Endothelial cell of umbilical vein (primary cell): ENCODE measurements at regions of chr18 and their contacts with region 1.

Region 1: DNA sequence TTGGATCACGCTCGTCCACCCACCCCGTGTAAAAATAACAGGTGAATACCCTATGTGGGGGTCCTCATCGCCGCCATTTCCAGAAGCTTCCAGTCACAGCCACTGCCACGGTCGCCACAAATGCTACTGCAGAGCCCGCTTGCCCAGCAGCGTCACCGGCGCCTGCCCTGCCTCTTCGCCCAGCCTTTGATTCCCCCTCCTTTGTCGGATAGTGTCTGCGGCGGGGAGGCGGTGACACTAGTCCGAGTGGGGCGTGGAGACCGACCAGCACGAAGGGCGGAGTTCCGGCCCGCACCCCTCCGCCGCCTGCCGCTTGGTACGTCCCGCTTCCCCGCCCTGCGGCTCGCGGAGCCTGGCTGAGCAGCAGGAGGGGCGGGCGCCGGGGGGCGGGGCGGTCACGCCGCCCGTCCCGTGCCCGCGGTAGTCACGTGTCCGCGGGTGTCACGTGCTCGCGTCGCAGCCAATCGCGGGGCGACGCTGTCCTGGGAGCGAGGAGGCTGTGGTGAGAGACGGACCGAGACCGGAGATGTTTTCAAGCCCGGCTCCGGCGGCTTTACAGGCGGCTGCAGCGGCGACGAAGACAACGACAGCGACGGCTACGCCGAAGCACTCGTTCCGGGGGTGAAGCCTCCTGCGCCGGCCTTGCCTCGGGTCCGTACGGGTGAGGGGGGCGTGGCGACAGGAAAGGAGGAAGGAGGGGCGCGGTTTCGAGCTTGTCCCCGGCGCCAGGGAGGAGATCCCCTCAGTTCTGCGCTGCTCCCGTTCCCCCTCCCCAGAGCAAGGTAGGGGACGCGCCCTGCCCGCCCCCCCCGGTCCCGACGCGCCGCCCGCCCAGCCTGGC is at the start of gene ANKRD12:
- DNase-seq: peak; percentile 99
- H3K4me3 ChIP-seq: peak within 1 kb of the TSS; percentile 50 to 86 (median 70)
- H3K27ac ChIP-seq: peak within 1 kb of the TSS; percentile 95
- H3K4me1 ChIP-seq: peaks cover 31% of the 10 kb centered on the region
- H3K27me3 ChIP-seq: no peaks in the 10 kb centered on the region
- CTCF ChIP-seq: no peak
- POLR2A ChIP-seq: peak; percentile 82
- total RNA-seq, gene ANKRD12: 25.1 and 25.4 TPM in 2 replicates

Region 2: GRCh38 chr18:9066817-9067306 is 69.7 kb before region 1 on chr18:
- CTCF ChIA-PET with region 1: interaction called, 60 read pairs
- POLR2A ChIA-PET with region 1: no interaction called
- dilution Hi-C with region 1: no loop called
- intact Hi-C with region 1: loop called (anchors 2 kb)
- DNase-seq: no peak
- H3K4me3 ChIP-seq: no peak overlapping the region
- H3K27ac ChIP-seq: no peak overlapping the region
- H3K4me1 ChIP-seq: no peaks in the 10 kb centered on the region
- H3K27me3 ChIP-seq: no peaks in the 10 kb centered on the region
- CTCF ChIP-seq: no peak
- POLR2A ChIP-seq: no peak

Region 3: GRCh38 chr18:9102508-9103375 is 33.8 kb before region 1 on chr18 and contains the start of gene NDUFV2:
- CTCF ChIA-PET with region 1: interaction called, 23 read pairs
- POLR2A ChIA-PET with region 1: interaction called, 5 read pairs
- dilution Hi-C with region 1: no loop called
- intact Hi-C with region 1: loop called (anchors 1 kb)
- DNase-seq: peak; percentile 95
- H3K4me3 ChIP-seq: peak within 1 kb of the TSS; percentile 69 to 98 (median 92)
- H3K27ac ChIP-seq: peak within 1 kb of the TSS; percentile 95
- H3K4me1 ChIP-seq: peaks cover 46% of the 10 kb centered on the region
- H3K27me3 ChIP-seq: no peaks in the 10 kb centered on the region
- CTCF ChIP-seq: no peak
- POLR2A ChIP-seq: no peak
- total RNA-seq, gene NDUFV2: 147 and 152 TPM in 2 replicates

Region 4: GRCh38 chr18:9117980-9118841 is 18.3 kb before region 1 on chr18:
- CTCF ChIA-PET with region 1: interaction called, 12 read pairs
- POLR2A ChIA-PET with region 1: interaction called, 6 read pairs
- dilution Hi-C with region 1: no loop called
- intact Hi-C with region 1: loop called (anchors 1 kb)
- DNase-seq: peak; percentile 86
- H3K4me3 ChIP-seq: peak overlapping the region in 1 of 3 experiments; percentile 4
- H3K27ac ChIP-seq: peak overlapping the region; percentile 82
- H3K4me1 ChIP-seq: peaks cover 42% of the 10 kb centered on the region
- H3K27me3 ChIP-seq: no peaks in the 10 kb centered on the region
- CTCF ChIP-seq: no peak
- POLR2A ChIP-seq: no peak

Region 5: GRCh38 chr18:9147440-9148202 is 11.1 kb after region 1 on chr18:
- CTCF ChIA-PET with region 1: interaction called, 17 read pairs
- POLR2A ChIA-PET with region 1: no interaction called
- dilution Hi-C with region 1: no loop called
- intact Hi-C with region 1: no loop called
- DNase-seq: peak; percentile 79
- H3K4me3 ChIP-seq: no peak overlapping the region
- H3K27ac ChIP-seq: no peak overlapping the region
- H3K4me1 ChIP-seq: peaks cover 12% of the 10 kb centered on the region
- H3K27me3 ChIP-seq: no peaks in the 10 kb centered on the region
- CTCF ChIP-seq: peak; percentile 52 to 63
- POLR2A ChIP-seq: no peak

Region 6: DNA sequence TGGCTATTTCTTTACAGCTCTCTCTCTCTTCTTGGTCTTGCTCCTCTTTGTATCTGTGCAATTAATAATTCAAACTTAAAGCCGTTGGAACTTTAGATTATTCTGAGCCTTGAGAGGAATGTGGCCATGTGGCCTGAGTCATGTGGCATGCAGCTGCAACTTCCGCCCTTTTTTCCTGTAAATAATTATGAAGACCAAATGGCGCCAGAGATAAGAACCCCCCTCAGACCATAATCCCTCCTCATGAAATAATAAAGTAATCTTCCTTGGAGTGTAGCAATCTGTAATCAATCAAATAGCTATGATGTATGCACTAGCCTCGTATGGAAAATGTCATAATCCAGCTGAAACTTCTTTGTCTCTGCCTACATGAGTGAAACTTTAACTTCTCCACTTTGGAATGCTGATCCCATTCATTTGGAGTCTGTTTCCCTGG is 184.5 kb after region 1 on chr18:
- CTCF ChIA-PET with region 1: no interaction called
- POLR2A ChIA-PET with region 1: no interaction called
- dilution Hi-C with region 1: no loop called
- intact Hi-C with region 1: loop called (anchors 1 kb)
- DNase-seq: peak; percentile 97
- H3K4me3 ChIP-seq: no peak overlapping the region
- H3K27ac ChIP-seq: peak overlapping the region; percentile 95
- H3K4me1 ChIP-seq: peaks cover 29% of the 10 kb centered on the region
- H3K27me3 ChIP-seq: no peaks in the 10 kb centered on the region
- CTCF ChIP-seq: no peak
- POLR2A ChIP-seq: peak; percentile 48

Region 7: GRCh38 chr18:9334329-9334972 is 197.9 kb after region 1 on chr18 and contains the start of gene TWSG1:
- CTCF ChIA-PET with region 1: interaction called, 12 read pairs
- POLR2A ChIA-PET with region 1: interaction called, 8 read pairs
- dilution Hi-C with region 1: no loop called
- intact Hi-C with region 1: loop called (anchors 1 kb)
- DNase-seq: peak; percentile 93
- H3K4me3 ChIP-seq: peak within 1 kb of the TSS; percentile 77 to 88 (median 87)
- H3K27ac ChIP-seq: peak within 1 kb of the TSS; percentile 71
- H3K4me1 ChIP-seq: peaks cover 3% of the 10 kb centered on the region
- H3K27me3 ChIP-seq: no peaks in the 10 kb centered on the region
- CTCF ChIP-seq: peak in 1 of 2 donors; percentile 65
- POLR2A ChIP-seq: peak; percentile 65
- total RNA-seq, gene TWSG1: 57.4 and 69.6 TPM in 2 replicates